AG04449 (cell line): ENCODE measurements at regions of chr6 and their contacts with region 1.

Region 1: DNA sequence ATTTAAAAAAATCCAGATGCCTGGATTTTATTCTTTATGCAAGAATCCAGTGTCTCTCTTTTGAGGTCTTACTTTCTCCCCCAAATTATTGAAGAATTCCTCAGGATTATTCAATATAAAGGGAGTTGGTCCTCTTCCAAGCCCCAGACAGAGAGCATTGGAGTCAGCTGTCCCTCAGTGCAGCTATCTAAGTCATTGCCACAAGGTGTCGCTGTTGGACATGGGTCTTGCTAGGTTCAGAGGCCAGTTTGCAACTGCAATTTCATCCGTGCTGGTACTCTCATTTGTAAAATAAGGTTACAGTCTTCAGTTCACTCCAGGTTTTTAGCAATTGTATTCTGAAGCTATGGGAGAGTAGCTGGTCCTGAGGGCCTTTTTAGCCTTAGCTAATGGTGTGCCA is 27.8 kb downstream of the CCN2 start:
- DNase-seq: no peak
- H3K4me3 ChIP-seq: no peak overlapping the region
- CTCF ChIP-seq: peak; percentile 48

Region 2: DNA sequence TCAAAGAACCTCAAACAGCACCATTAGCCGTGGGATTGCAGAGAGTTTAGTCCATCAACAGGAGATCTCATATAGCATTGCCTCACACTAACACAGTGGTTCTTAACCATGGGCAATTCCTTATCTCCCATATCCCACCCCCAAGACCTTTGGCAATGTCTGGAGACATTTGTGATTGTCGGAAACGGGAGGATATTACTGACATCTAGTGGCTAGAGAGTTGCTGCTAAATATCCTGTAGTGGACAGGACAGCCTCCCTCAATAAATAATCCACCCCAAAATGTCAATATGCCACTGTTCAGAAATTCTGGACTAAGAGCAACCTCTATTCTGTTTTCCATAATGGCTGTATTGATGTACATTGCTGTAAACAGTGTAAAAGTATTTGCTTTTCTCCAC is 237.9 kb after region 1 on chr6:
- CTCF ChIA-PET with region 1: interaction called, 24 read pairs
- POLR2A ChIA-PET with region 1: no interaction called
- DNase-seq: no peak
- H3K4me3 ChIP-seq: no peak overlapping the region
- CTCF ChIP-seq: peak; percentile 49

Region 3: DNA sequence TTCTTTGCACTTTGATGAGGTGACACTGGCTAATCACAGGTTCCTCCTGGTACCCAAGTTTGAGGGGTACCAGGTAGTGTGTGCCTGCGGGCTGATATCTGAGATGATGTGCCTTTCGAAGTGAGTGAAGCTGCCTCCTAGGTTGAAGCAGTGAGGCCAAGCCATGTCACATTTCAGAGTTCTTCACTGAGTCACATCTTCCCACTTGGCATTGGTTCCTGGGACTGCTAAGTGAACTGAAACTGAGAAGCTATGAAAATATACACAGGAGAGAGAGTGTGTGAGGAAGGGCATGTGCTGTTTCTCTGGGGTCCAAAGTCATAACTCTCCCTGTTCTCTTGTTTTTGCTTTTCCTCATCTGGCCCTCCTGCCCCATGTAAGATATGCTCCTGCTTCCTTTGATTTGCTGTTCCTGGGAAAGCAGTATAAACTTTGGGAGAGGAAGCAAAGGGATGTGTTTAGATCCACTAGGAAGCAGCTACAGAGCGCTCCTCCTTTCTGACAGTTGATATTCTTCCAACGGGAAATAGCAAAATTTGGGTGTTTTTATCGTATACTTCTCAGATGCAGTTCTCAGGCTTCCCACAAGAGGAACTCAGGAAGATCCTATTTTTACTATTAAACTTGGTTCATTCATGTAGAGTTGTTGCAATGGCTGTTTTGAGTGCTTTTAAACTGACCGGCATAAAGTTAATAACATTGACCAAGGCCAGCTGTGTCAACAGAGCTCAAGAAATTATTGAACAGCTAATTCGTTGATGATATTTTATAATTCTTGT is 324.2 kb after region 1 on chr6:
- CTCF ChIA-PET with region 1: interaction called, 173 read pairs
- POLR2A ChIA-PET with region 1: interaction called, 3 read pairs
- DNase-seq: no peak
- H3K4me3 ChIP-seq: no peak overlapping the region
- CTCF ChIP-seq: no peak

Region 4: DNA sequence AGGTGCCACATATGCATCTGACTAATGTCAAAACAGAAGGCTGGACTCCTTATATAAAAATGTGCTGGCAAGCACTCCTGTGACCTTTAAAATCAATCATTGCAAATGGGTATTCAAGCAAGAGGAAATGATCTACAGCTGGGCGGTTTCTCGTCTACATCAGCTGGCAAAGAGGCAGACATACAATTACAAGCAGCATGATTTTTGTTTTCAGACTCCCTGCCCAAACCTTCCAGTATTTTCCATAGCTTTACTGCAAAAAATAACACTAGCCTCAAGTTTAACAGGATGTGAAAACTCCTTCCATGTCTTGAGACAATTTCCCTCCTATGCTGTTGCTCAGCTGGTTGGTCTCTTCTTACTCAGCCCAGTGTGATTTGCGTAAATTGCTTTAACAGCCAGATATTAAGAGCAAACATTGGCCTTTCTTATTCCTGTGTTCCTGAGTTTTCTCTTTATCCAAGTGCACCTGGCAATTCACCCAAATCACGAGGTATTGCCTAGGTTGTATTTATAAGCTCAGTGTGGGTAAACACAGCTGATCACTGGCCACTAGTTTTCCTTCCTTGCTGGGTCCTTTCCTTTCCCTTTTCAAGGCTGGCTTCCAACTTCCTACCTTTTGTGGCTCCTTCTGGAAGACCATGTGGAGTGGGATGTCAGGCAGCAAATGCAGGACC is 347.5 kb after region 1 on chr6:
- CTCF ChIA-PET with region 1: interaction called, 166 read pairs
- POLR2A ChIA-PET with region 1: no interaction called
- DNase-seq: no peak
- H3K4me3 ChIP-seq: no peak overlapping the region
- CTCF ChIP-seq: no peak

Region 5: GRCh38 chr6:132483779-132484679 is 560.7 kb after region 1 on chr6:
- CTCF ChIA-PET with region 1: interaction called, 24 read pairs
- POLR2A ChIA-PET with region 1: interaction called, 3 read pairs
- DNase-seq: no peak
- H3K4me3 ChIP-seq: no peak overlapping the region
- CTCF ChIP-seq: peak; percentile 20